Ascending aorta (tissue), 2 donors: ENCODE measurements at regions of chr6 and their contacts with region 1.

Region 1: GRCh38 chr6:118651282-118652050 is at the start of gene CEP85L:
- DNase-seq: peak; percentile 63 to 92
- H3K4me3 ChIP-seq: peak within 1 kb of the TSS; percentile 77 to 98
- H3K27ac ChIP-seq: peak within 1 kb of the TSS; percentile 91 to 99
- H3K4me1 ChIP-seq: peaks cover 0 to 11% of the 10 kb centered on the region in 2 donors
- H3K27me3 ChIP-seq: no peaks in the 10 kb centered on the region
- CTCF ChIP-seq: peak in 1 of 3 experiments; percentile 33
- total RNA-seq, gene CEP85L: 15.0 TPM

Region 2: GRCh38 chr6:118436482-118436881 is 215.0 kb before region 1 on chr6:
- intact Hi-C with region 1: no loop called
- DNase-seq: no peak
- H3K4me3 ChIP-seq: no peak overlapping the region
- H3K27ac ChIP-seq: no peak overlapping the region
- H3K4me1 ChIP-seq: no peaks in the 10 kb centered on the region
- H3K27me3 ChIP-seq: no peaks in the 10 kb centered on the region
- CTCF ChIP-seq: no peak

Region 3: GRCh38 chr6:118558464-118559217 is 92.8 kb before region 1 on chr6:
- intact Hi-C with region 1: loop called (anchors 5 kb)
- DNase-seq: no peak
- H3K4me3 ChIP-seq: peak overlapping the region in 1 of 2 donors; percentile 69
- H3K27ac ChIP-seq: peak overlapping the region; percentile 29 to 42
- H3K4me1 ChIP-seq: peaks cover 0 to 22% of the 10 kb centered on the region in 2 donors
- H3K27me3 ChIP-seq: no peaks in the 10 kb centered on the region
- CTCF ChIP-seq: no peak

Region 4: GRCh38 chr6:118709859-118710350 is 58.4 kb after region 1 on chr6:
- intact Hi-C with region 1: loop called (anchors 5 kb)
- DNase-seq: peak in 1 of 2 donors; percentile 11
- H3K4me3 ChIP-seq: peak overlapping the region; percentile 34 to 51
- H3K27ac ChIP-seq: no peak overlapping the region
- H3K4me1 ChIP-seq: peaks cover 0 to 5% of the 10 kb centered on the region in 2 donors
- H3K27me3 ChIP-seq: no peaks in the 10 kb centered on the region
- CTCF ChIP-seq: no peak

Region 5: GRCh38 chr6:118776607-118777549 is 125.4 kb after region 1 on chr6:
- intact Hi-C with region 1: loop called (anchors 5 kb)
- DNase-seq: peak; percentile 17 to 87
- H3K4me3 ChIP-seq: no peak overlapping the region
- H3K27ac ChIP-seq: no peak overlapping the region
- H3K4me1 ChIP-seq: peaks cover 0 to 4% of the 10 kb centered on the region in 2 donors
- H3K27me3 ChIP-seq: no peaks in the 10 kb centered on the region
- CTCF ChIP-seq: peak; percentile 29 to 73 (median 70)

Region 6: DNA sequence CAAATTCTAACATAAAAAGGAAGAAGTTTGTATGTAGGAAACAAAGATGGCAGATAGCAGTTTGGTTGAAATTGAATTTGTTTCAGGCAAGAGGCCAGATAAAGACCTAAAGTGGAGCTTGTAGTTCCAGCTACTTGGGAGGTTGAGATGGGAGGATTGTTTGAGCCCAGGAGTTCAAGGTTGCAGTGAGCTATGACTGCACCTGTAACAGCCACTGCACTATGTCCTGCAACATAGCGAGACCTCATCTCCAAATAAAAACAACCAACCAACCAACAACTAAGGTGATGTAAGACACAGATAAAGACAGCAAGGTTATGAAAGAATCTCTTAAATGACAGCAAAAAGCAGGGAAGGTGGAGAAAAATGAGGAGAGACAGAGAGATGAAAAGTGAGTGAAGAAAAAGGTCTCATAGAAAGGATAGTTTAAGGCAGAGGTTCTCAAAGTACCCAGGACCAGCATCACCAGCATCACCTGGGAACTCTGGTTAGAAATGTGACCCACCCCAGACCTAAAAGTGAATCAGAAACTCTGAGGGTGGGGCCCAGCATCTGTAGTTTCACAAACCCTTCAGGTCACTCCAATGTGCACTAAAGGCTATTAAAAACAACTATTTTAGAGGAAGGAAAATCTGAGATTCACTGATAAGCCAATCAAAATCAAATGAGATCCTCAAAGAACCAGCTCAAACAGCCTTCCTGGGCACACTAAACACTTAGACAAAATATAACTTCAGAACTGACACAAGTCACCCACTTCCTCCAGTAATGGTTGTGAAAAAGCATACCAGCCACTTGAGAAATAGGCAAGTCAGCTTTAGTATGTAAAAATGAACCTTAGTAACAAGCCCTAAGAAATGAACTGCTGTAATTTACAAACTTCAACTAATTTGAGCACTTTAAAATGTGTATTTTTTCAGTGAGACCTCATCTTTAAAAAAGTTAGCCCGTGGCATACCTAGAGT is 369.4 kb after region 1 on chr6:
- intact Hi-C with region 1: no loop called
- DNase-seq: no peak
- H3K4me3 ChIP-seq: no peak overlapping the region
- H3K27ac ChIP-seq: no peak overlapping the region
- H3K4me1 ChIP-seq: no peaks in the 10 kb centered on the region
- H3K27me3 ChIP-seq: no peaks in the 10 kb centered on the region
- CTCF ChIP-seq: no peak